ENCODE measurements at regions of chr6 and their contacts with region 1.

Region 1: GRCh38 chr6:31197559-31198305 is 27.2 kb upstream of the POU5F1 start:
- DNase-seq: peak; percentile 93 to 96
- ATAC-seq: peak; percentile 84

Region 2: DNA sequence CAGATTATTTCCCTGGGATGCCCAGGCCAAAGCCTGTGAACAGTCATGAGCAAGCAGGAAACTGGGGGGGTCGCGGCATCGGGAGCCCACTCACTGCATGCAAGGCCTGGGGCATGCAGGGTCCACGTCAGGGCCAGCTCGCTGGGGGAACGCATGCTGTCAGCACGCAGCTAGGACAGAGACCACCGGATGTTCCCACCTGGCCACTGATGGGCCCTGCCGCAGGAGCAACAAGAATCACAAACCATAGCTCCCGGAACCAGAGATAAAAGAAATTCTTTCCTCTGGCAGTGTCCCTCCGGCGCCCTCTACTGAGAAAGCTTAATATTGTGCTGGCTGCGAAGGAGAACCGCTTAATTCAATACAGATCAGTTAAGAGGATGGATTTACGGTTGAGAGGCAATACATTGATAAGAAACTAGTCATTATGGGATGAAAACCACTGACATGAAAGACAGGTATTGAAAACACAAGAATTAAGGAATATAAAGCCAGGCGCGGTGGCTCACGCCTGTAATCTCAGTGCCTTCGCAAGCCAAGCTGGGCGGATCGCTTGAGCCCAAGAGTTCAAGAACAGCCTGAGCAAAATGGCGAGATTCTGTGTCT is 118.0 kb before region 1 on chr6:
- intact Hi-C with region 1: no loop called
- DNase-seq: peak; percentile 47 to 68
- ATAC-seq: peak; percentile 79

Region 3: GRCh38 chr6:31139599-31139998 is 58.1 kb before region 1 on chr6:
- intact Hi-C with region 1: loop called (anchors 2 to 5 kb)
- DNase-seq: no peak
- ATAC-seq: no peak

Region 4: GRCh38 chr6:31356946-31357466 is 159.3 kb after region 1 on chr6 and contains the start of gene HLA-B:
- intact Hi-C with region 1: loop called in 1 of 2 experiments (anchors 2 kb)
- DNase-seq: peak; percentile 94 to 98
- ATAC-seq: peak; percentile 93
- total RNA-seq, gene HLA-B: 1,508 to 2,239 TPM

Region 5: GRCh38 chr6:31366693-31367470 is 169.2 kb after region 1 on chr6:
- intact Hi-C with region 1: loop called in 1 of 2 experiments (anchors 5 kb)
- DNase-seq: peak; percentile 82 to 94
- ATAC-seq: peak; percentile 99

Region 6: GRCh38 chr6:31769684-31770371 is 572.1 kb after region 1 on chr6:
- intact Hi-C with region 1: no loop called
- DNase-seq: peak; percentile 87 to 91
- ATAC-seq: peak; percentile 75

Measured in left colon (tissue), 2 donors.